ENCODE measurements at regions of chr11 and their contacts with region 1.

Region 1: GRCh38 chr11:86360775-86361395 is 13.8 kb upstream of the CCDC81 start:
- DNase-seq: peak; percentile 61
- H3K4me3 ChIP-seq: no peak overlapping the region
- H3K27ac ChIP-seq: peak overlapping the region; percentile 34
- H3K4me1 ChIP-seq: peaks cover 7% of the 10 kb centered on the region
- H3K27me3 ChIP-seq: no peaks in the 10 kb centered on the region
- CTCF ChIP-seq: peak; percentile 19 to 33
- POLR2A ChIP-seq: no peak

Region 2: DNA sequence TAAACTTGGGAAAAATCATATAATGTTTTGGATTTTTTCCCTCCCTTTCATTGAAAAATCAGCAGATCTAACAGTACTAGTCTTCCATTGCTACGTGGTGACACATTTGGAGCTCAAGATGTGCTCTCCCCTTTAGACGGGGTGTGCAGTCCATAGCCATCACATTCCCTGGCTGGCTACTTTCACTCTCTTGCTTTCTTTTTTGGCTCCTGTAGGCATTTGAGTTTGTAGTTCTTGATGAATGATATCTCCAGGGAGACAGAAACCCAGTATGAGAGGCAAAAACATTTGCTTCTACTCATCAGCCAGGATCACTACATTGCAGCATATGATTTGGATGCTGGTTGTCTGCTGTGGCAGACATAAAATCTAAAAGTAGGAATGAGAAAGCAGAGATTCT is 25.9 kb after region 1 on chr11:
- CTCF ChIA-PET with region 1: interaction called, 14 read pairs
- POLR2A ChIA-PET with region 1: no interaction called
- dilution Hi-C with region 1: no loop called
- intact Hi-C with region 1: no loop called
- DNase-seq: no peak
- H3K4me3 ChIP-seq: no peak overlapping the region
- H3K27ac ChIP-seq: no peak overlapping the region
- H3K4me1 ChIP-seq: peaks cover 12% of the 10 kb centered on the region
- H3K27me3 ChIP-seq: no peaks in the 10 kb centered on the region
- CTCF ChIP-seq: no peak
- POLR2A ChIP-seq: no peak

Region 3: DNA sequence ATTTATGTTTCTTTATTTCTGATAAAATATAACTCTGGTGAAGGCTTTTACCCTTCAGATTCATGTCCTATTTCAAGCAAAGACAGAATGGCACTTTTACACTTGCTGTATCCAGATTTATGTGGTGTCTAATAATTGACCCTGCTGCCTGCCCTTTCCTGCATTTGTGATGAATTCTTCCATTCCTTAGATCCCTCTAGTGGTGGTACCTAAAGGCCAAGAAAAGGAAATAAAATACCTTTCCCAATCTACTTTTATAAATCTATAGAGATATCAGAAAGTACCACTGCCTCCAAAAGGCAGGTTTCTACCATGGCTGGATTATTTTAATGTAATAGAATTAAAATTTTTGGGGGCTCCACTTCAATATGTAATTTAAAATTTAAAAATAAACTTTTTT is 48.0 kb after region 1 on chr11:
- CTCF ChIA-PET with region 1: interaction called, 50 read pairs
- POLR2A ChIA-PET with region 1: no interaction called
- dilution Hi-C with region 1: no loop called
- intact Hi-C with region 1: no loop called
- DNase-seq: no peak
- H3K4me3 ChIP-seq: no peak overlapping the region
- H3K27ac ChIP-seq: no peak overlapping the region
- H3K4me1 ChIP-seq: no peaks in the 10 kb centered on the region
- H3K27me3 ChIP-seq: no peaks in the 10 kb centered on the region
- CTCF ChIP-seq: peak; percentile 17 to 35
- POLR2A ChIP-seq: no peak

Region 4: DNA sequence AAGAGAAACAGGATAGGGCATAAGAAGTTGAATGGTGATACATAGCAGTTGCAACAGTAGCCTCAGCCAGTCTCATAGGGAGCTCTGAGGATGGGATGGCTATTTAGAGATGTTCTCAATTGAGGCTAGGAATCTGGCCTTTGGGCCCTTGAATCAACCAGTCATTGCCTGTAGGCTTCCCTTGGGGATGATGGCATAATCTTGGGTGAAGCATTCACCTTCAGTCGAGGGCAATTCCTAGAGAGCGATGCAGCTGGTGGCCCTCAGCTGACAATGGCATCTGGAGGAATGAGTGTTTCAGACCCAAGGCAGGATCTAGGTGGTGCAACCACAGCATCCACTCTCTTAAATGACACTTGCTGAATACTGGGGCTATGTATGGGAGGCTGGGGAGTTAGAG is 74.8 kb after region 1 on chr11:
- CTCF ChIA-PET with region 1: interaction called, 10 read pairs
- POLR2A ChIA-PET with region 1: no interaction called
- dilution Hi-C with region 1: no loop called
- intact Hi-C with region 1: no loop called
- DNase-seq: no peak
- H3K4me3 ChIP-seq: no peak overlapping the region
- H3K27ac ChIP-seq: no peak overlapping the region
- H3K4me1 ChIP-seq: peaks cover 7% of the 10 kb centered on the region
- H3K27me3 ChIP-seq: no peaks in the 10 kb centered on the region
- CTCF ChIP-seq: no peak
- POLR2A ChIP-seq: no peak

Region 5: DNA sequence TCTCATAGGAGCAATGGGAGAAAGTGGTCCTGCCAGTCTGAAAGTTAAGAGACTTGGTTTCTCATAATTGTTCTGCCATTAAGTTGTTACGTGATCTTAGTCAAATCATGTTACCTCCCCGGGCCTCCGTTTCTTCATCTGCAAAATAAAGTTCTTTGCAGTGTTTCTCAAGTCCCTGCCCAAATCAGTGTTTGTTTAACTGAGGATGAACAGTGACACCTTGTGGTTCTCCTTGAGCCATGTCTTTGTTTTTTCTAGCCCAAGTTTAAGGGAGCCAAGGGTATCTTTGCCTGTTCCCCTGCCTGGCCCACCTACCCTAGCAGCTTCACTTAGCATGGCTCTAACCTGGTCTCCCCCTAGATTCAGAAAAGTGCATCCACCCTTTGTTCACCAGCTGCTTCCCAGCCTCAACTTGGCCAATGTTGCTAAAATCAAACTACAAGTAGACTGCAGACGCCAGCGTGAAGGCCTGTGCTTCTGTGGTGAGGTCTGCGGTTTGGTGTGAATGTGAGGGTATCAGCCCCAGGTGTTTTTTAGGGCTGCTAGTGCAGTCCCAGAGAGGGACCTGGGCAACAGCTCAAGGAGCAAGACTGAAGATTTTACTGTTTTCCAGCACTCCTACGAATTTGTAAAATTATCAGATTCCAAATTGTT is 558.8 kb after region 1 on chr11:
- CTCF ChIA-PET with region 1: interaction called, 5 read pairs
- POLR2A ChIA-PET with region 1: no interaction called
- dilution Hi-C with region 1: no loop called
- intact Hi-C with region 1: loop called (anchors 1 kb)
- DNase-seq: peak; percentile 88
- H3K4me3 ChIP-seq: no peak overlapping the region
- H3K27ac ChIP-seq: peak overlapping the region; percentile 100
- H3K4me1 ChIP-seq: peaks cover 48% of the 10 kb centered on the region
- H3K27me3 ChIP-seq: no peaks in the 10 kb centered on the region
- CTCF ChIP-seq: peak; percentile 60
- POLR2A ChIP-seq: no peak